Calu3 (cell line): ENCODE measurements at regions of chr10 and their contacts with region 1.

Region 1: DNA sequence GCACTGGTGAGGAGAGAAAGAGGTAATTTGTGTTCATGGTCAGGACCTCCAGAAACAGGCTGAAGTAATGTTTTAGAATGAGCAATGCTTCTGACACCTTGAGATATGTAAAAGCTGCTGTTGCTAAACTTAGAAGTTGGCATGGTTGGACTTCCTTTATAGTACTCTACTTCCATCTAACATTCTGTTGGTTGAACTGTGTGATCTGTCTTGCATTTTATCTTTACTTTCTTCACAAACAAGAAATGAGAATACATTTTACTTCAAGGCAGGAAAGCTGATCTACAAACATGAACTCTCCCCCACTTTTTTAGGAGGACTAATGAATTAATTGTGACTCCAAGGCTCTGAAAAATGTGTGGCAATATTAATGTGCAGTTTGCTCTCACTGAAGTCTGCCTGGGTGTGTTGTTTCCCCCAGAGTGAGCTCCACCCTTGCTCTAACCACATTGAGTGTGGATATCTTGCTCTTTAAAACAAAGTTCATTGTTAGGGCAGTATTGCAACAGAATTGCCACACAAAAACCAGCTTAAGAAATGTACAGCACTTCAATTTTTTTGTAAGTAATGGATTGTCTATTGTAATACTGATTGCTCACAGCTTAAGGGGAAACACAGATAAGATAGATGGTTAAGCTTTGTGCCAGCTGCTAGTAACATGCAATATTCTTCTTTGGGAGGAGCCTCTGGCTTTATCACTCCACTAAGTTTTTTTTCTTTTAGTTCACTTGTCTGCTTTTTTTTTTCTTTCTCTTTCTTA is 69.0 kb downstream of the ADD3 start:
- DNase-seq: peak; percentile 46
- H3K4me3 Mint-ChIP-seq: peak overlapping the region; percentile 48
- H3K27ac Mint-ChIP-seq: peak overlapping the region; percentile 83
- H3K4me1 Mint-ChIP-seq: peaks cover 45% of the 10 kb centered on the region
- H3K27me3 Mint-ChIP-seq: no peaks in the 10 kb centered on the region
- CTCF ChIP-seq: no peak

Region 2: GRCh38 chr10:109978481-109978880 is 98.3 kb before region 1 on chr10:
- CTCF ChIA-PET with region 1: no interaction called
- intact Hi-C with region 1: loop called (anchors 5 kb)
- DNase-seq: peak; percentile 41
- H3K4me3 Mint-ChIP-seq: no peak overlapping the region
- H3K27ac Mint-ChIP-seq: no peak overlapping the region
- H3K4me1 Mint-ChIP-seq: peaks cover 31% of the 10 kb centered on the region
- H3K27me3 Mint-ChIP-seq: no peaks in the 10 kb centered on the region
- CTCF ChIP-seq: peak; percentile 35

Region 3: GRCh38 chr10:110016039-110016438 is 60.7 kb before region 1 on chr10:
- CTCF ChIA-PET with region 1: interaction called, 4 read pairs
- intact Hi-C with region 1: loop called (anchors 2 kb)
- DNase-seq: no peak
- H3K4me3 Mint-ChIP-seq: no peak overlapping the region
- H3K27ac Mint-ChIP-seq: no peak overlapping the region
- H3K4me1 Mint-ChIP-seq: peaks cover 35% of the 10 kb centered on the region
- H3K27me3 Mint-ChIP-seq: no peaks in the 10 kb centered on the region
- CTCF ChIP-seq: no peak

Region 4: GRCh38 chr10:110042181-110042580 is 34.6 kb before region 1 on chr10:
- CTCF ChIA-PET with region 1: interaction called, 5 read pairs
- intact Hi-C with region 1: loop called (anchors 2 kb)
- DNase-seq: peak; percentile 15
- H3K4me3 Mint-ChIP-seq: no peak overlapping the region
- H3K27ac Mint-ChIP-seq: no peak overlapping the region
- H3K4me1 Mint-ChIP-seq: peaks cover 29% of the 10 kb centered on the region
- H3K27me3 Mint-ChIP-seq: no peaks in the 10 kb centered on the region
- CTCF ChIP-seq: no peak